ENCODE measurements at regions of chr17 and their contacts with region 1.

Region 1: GRCh38 chr17:3859940-3860339 is 13.9 kb upstream of the NCBP3 start:
- DNase-seq: no peak
- ATAC-seq: no peak
- H3K4me3 Mint-ChIP-seq: no peak overlapping the region
- H3K27ac Mint-ChIP-seq: no peak overlapping the region
- H3K4me1 Mint-ChIP-seq: no peaks in the 10 kb centered on the region
- H3K27me3 Mint-ChIP-seq: no peaks in the 10 kb centered on the region

Region 2: GRCh38 chr17:3907483-3908216 is 47.7 kb after region 1 on chr17:
- CTCF ChIA-PET with region 1: no interaction called
- POLR2A ChIA-PET with region 1: no interaction called
- intact Hi-C with region 1: loop called (anchors 5 kb)
- DNase-seq: no peak
- ATAC-seq: no peak
- H3K4me3 Mint-ChIP-seq: no peak overlapping the region
- H3K27ac Mint-ChIP-seq: no peak overlapping the region
- H3K4me1 Mint-ChIP-seq: peaks cover 22% of the 10 kb centered on the region
- H3K27me3 Mint-ChIP-seq: no peaks in the 10 kb centered on the region

Region 3: DNA sequence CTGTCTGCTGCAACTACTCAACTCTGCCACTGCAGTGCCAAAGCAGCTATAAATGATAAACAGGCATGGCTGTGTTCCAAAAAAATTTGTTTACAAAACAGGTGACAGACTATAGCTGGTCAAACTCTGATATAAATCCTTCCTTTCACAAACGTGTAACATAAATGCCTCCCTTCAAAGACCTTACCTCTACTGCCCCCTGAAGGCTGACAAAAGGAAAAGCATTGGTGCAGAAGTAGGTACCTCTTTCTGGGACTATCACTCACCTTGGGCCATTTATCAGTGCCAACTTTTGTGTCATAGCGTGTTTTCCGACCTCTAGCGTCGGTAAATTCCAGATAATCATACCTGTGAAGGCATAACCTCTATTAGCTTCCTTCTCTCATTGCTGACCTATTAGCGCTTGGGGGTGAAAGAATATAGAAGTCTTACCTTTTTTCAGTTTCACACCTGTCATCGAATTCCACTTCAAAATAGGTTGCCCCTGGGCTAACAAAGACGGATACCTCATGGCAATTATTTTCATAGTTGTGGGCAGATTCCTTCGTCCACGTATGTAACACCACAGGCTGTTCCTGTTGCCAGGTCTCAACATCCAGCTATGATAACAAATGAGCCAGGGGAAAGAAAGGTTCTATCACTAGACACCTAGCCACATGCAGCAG is 215.0 kb after region 1 on chr17:
- CTCF ChIA-PET with region 1: interaction called, 4 read pairs
- POLR2A ChIA-PET with region 1: no interaction called
- intact Hi-C with region 1: loop called (anchors 2 to 5 kb)
- DNase-seq: peak; percentile 9
- ATAC-seq: peak; percentile 66
- H3K4me3 Mint-ChIP-seq: no peak overlapping the region
- H3K27ac Mint-ChIP-seq: peak overlapping the region; percentile 38
- H3K4me1 Mint-ChIP-seq: no peaks in the 10 kb centered on the region
- H3K27me3 Mint-ChIP-seq: no peaks in the 10 kb centered on the region